B cell (primary cell): ENCODE measurements at regions of chr7 and their contacts with region 1.

Region 1: DNA sequence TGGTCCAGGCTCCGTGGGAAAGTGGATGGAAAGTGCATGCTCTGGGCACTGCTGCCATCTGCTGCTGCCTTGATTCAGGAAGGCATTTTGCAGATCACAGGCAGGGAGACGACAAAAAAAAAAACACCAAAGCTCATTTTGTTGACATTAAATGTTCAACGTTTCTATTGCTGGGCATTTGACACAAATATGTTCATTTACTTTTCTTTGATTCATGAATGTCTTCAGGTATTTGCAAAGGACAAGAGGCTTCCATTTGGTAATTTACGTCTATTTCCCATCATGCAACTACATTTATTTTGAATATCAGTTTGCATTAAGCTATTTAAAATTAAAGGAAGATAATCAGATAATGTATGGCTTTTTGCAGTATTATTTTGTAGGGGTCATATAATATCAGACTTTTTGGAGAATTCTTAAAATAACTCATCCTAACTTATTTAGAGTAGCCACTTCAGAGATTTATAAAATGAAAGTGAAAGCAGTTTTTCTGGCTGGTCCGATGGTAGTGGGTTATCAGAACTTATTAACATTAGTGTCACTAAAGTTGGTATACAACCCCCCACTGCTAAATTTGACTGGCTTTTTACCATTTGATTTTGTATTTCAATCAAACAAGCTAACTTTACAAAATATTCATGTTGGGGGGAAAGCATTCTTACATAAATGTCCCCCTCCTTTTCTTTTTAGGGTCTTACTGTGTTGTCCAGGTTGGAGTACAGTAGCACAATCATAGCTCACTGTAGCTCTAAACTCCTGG is 65.3 kb downstream of the PDIA4 start:
- DNase-seq: peak; percentile 87
- ATAC-seq: peak; percentile 60
- H3K4me3 ChIP-seq: peak overlapping the region; percentile 66 to 100 (median 75)
- H3K4me3 Mint-ChIP-seq: peak overlapping the region; percentile 98
- H3K27ac ChIP-seq: peak overlapping the region; percentile 56 to 89
- H3K27ac Mint-ChIP-seq: peak overlapping the region; percentile 90
- H3K4me1 ChIP-seq: peaks cover 9 to 27% of the 10 kb centered on the region in 2 donors
- H3K4me1 Mint-ChIP-seq: peaks cover 28% of the 10 kb centered on the region
- H3K27me3 ChIP-seq: no peaks in the 10 kb centered on the region
- H3K27me3 Mint-ChIP-seq: no peaks in the 10 kb centered on the region
- CTCF ChIP-seq: peak; percentile 78

Region 2: DNA sequence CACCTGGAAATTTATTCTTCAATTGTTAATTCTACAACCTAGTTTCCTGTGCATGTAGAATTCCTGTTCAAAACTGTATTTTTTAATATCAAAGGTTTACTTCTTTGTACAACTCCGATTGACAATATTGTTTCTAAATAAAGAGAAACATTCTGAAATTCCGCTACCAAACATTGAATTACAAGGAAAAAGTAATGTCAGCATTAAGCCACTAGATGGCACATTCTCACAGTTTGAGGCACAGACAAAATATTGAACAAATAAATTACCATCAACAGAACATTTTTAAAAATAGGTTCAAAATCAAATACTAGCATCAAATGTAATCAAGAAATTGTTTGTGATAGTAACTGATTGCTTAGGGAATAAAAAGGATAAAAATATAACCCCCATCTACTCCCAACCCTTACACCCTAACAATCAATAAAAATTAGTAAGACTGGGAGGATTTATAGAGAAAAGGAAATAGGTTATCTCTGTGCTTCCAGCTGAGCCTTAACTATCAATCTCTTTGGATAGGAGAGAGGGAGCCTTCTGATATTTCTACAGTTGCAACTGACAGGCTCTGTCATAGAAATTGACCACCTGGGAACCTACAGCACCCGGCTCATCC is 459.0 kb before region 1 on chr7:
- CTCF ChIA-PET with region 1: interaction called, 30 read pairs
- POLR2A ChIA-PET with region 1: no interaction called
- intact Hi-C with region 1: loop called (anchors 1 kb)
- DNase-seq: peak; percentile 61
- ATAC-seq: no peak
- H3K4me3 ChIP-seq: no peak overlapping the region
- H3K4me3 Mint-ChIP-seq: no peak overlapping the region
- H3K27ac ChIP-seq: no peak overlapping the region
- H3K27ac Mint-ChIP-seq: no peak overlapping the region
- H3K4me1 ChIP-seq: peaks cover 11 to 23% of the 10 kb centered on the region in 2 donors
- H3K4me1 Mint-ChIP-seq: peaks cover 47% of the 10 kb centered on the region
- H3K27me3 ChIP-seq: no peaks in the 10 kb centered on the region
- H3K27me3 Mint-ChIP-seq: no peaks in the 10 kb centered on the region
- CTCF ChIP-seq: peak; percentile 97

Region 3: GRCh38 chr7:148698397-148699023 is 264.5 kb before region 1 on chr7 and contains the start of gene CUL1:
- CTCF ChIA-PET with region 1: interaction called, 5 read pairs
- POLR2A ChIA-PET with region 1: interaction called, 10 read pairs
- intact Hi-C with region 1: loop called (anchors 2 kb)
- DNase-seq: peak; percentile 90
- ATAC-seq: peak; percentile 81
- H3K4me3 ChIP-seq: peak within 1 kb of the TSS; percentile 76 to 93 (median 84)
- H3K4me3 Mint-ChIP-seq: peak within 1 kb of the TSS; percentile 91
- H3K27ac ChIP-seq: peak within 1 kb of the TSS; percentile 69 to 91
- H3K27ac Mint-ChIP-seq: peak within 1 kb of the TSS; percentile 92
- H3K4me1 ChIP-seq: peaks cover 30 to 31% of the 10 kb centered on the region in 2 donors
- H3K4me1 Mint-ChIP-seq: peaks cover 46% of the 10 kb centered on the region
- H3K27me3 ChIP-seq: no peaks in the 10 kb centered on the region
- H3K27me3 Mint-ChIP-seq: no peaks in the 10 kb centered on the region
- CTCF ChIP-seq: no peak
- total RNA-seq, gene CUL1: 51.1 and 53.5 TPM in 2 replicates

Region 4: GRCh38 chr7:148802101-148802493 is 160.9 kb before region 1 on chr7:
- CTCF ChIA-PET with region 1: no interaction called
- POLR2A ChIA-PET with region 1: no interaction called
- intact Hi-C with region 1: no loop called
- DNase-seq: no peak
- ATAC-seq: no peak
- H3K4me3 ChIP-seq: no peak overlapping the region
- H3K4me3 Mint-ChIP-seq: no peak overlapping the region
- H3K27ac ChIP-seq: no peak overlapping the region
- H3K27ac Mint-ChIP-seq: no peak overlapping the region
- H3K4me1 ChIP-seq: no peaks in the 10 kb centered on the region
- H3K4me1 Mint-ChIP-seq: no peaks in the 10 kb centered on the region
- H3K27me3 ChIP-seq: no peaks in the 10 kb centered on the region
- H3K27me3 Mint-ChIP-seq: no peaks in the 10 kb centered on the region
- CTCF ChIP-seq: no peak

Region 5: GRCh38 chr7:148856891-148857290 is 106.1 kb before region 1 on chr7:
- CTCF ChIA-PET with region 1: interaction called, 22 read pairs
- POLR2A ChIA-PET with region 1: no interaction called
- intact Hi-C with region 1: loop called (anchors 1 kb)
- DNase-seq: no peak
- ATAC-seq: no peak
- H3K4me3 ChIP-seq: no peak overlapping the region
- H3K4me3 Mint-ChIP-seq: no peak overlapping the region
- H3K27ac ChIP-seq: no peak overlapping the region
- H3K27ac Mint-ChIP-seq: no peak overlapping the region
- H3K4me1 ChIP-seq: no peaks in the 10 kb centered on the region
- H3K4me1 Mint-ChIP-seq: peaks cover 12% of the 10 kb centered on the region
- H3K27me3 ChIP-seq: no peaks in the 10 kb centered on the region
- H3K27me3 Mint-ChIP-seq: no peaks in the 10 kb centered on the region
- CTCF ChIP-seq: no peak

Region 6: DNA sequence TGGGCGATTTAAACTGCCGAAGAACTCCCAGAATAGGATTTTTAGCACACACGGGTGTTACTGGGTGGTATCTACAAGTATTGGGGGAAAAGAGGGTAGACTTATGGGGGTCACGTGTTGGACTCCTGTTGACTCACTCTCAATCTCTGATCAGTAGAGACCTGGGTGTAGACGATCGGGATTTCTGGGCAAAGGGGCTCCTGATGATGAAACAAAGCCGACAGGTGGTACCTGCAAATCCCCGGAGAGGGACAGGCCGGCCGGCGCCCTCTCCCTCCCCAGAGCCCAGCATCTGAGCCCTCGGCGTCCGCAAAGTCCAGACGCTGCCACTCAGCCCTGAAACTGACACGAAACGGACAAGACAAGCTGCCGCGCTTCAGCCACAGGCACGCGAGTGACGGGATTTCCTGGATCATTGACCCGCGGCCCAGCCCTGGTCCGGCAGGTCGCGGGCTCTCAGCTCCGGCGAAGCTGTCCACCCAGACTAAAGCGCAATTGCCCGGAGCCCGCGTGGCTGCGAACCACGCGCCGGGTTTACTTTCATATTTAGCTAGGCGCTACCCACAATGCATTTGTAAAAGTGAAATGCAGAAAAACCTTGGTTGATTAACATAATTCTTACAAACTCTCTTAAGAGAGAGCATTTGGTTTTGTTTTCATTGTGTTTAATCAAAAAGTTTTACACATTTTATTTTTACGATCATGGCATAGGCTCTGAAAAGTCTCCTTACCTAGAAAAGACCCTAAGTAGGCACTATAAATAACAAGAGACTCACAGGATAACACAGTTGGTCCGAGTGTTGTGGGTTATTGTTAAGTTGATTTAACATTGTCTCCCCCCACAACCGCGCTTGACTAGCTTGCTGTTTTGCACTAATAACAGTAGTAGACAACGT is 22.1 kb before region 1 on chr7:
- CTCF ChIA-PET with region 1: interaction called, 15 read pairs
- POLR2A ChIA-PET with region 1: no interaction called
- intact Hi-C with region 1: loop called (anchors 1 kb)
- DNase-seq: peak; percentile 91
- ATAC-seq: peak; percentile 80
- H3K4me3 ChIP-seq: peak overlapping the region; percentile 85 to 98 (median 89)
- H3K4me3 Mint-ChIP-seq: peak overlapping the region; percentile 95
- H3K27ac ChIP-seq: peak overlapping the region; percentile 77 to 88
- H3K27ac Mint-ChIP-seq: peak overlapping the region; percentile 97
- H3K4me1 ChIP-seq: peaks cover 6 to 12% of the 10 kb centered on the region in 2 donors
- H3K4me1 Mint-ChIP-seq: peaks cover 13% of the 10 kb centered on the region
- H3K27me3 ChIP-seq: no peaks in the 10 kb centered on the region
- H3K27me3 Mint-ChIP-seq: no peaks in the 10 kb centered on the region
- CTCF ChIP-seq: no peak

Region 7: GRCh38 chr7:149669121-149669818 is 706.3 kb after region 1 on chr7:
- CTCF ChIA-PET with region 1: no interaction called
- POLR2A ChIA-PET with region 1: no interaction called
- intact Hi-C with region 1: no loop called
- DNase-seq: peak; percentile 19
- ATAC-seq: no peak
- H3K4me3 ChIP-seq: no peak overlapping the region
- H3K4me3 Mint-ChIP-seq: no peak overlapping the region
- H3K27ac ChIP-seq: no peak overlapping the region
- H3K27ac Mint-ChIP-seq: no peak overlapping the region
- H3K4me1 ChIP-seq: no peaks in the 10 kb centered on the region
- H3K4me1 Mint-ChIP-seq: no peaks in the 10 kb centered on the region
- H3K27me3 ChIP-seq: peaks cover 0 to 15% (median 0%) of the 10 kb centered on the region in 4 experiments
- H3K27me3 Mint-ChIP-seq: peaks cover 70% of the 10 kb centered on the region
- CTCF ChIP-seq: peak; percentile 43